Calu3 (cell line): ENCODE measurements at regions of chr10 and their contacts with region 1.

Region 1: DNA sequence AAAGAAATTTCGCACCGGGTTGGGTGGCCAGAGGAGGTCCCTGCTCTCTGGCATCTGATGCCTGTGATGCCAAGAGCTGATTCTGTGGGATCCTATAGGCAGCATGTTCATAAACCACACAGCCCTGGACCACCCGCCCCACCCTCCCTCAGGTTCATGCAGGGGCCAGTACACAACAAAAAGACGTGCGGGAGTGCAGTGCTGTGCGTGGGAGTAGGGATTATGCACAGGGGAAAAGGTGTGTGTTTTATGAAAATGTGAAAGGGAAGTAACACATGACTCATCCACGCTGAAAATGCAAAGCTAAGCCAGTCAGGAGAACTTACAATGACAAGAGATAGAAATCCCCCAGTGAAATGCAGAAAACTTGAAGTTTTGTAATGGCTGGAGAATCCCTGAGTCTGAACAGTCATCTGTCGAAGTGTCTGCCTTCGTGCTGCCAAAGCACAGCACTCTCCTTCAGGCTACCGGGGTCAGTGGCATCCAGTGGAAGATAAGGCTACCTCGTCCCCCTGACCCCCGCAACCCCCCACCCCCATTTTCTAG is 1.1 kb downstream of the KIAA1217 start:
- DNase-seq: peak; percentile 14
- H3K4me3 Mint-ChIP-seq: peak overlapping the region; percentile 88
- H3K27ac Mint-ChIP-seq: peak overlapping the region; percentile 4
- H3K4me1 Mint-ChIP-seq: peaks cover 40% of the 10 kb centered on the region
- H3K27me3 Mint-ChIP-seq: no peaks in the 10 kb centered on the region
- CTCF ChIP-seq: no peak

Region 2: DNA sequence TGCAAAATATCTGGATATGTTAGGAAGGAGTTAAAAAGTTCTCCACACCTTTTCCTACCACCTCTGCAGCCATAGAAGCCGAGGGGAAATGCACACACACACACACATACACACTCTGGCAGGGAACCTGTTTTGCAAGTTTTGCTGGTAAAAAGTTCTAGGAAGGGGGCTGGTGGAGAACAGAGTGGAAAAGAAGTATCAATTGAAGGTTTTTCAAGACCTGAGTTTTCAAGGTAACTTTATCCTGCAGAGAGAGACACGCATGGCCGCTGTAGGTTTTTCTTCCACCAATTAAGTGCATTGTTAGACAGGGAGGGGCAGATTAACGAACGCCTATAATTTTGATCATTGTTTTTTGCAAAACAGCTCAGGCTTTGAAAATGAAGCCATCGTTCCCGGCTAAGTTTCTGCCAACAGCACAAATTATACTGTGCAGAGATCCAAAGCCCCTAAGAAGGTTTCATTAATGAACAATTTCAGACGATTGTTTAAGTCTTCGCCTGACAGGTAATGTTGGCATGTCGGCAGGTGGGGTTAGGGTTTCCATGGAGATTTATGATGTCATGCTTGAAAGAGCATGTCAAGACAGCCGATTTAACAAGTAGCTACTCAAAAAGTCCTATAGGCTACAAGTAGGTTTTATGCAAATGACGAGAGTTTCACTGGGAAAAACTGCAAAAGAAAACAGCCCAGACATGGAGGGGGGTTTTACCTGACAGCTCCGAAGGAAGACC is 28.7 kb after region 1 on chr10:
- CTCF ChIA-PET with region 1: interaction called, 3 read pairs
- intact Hi-C with region 1: loop called (anchors 2 kb)
- DNase-seq: peak; percentile 74
- H3K4me3 Mint-ChIP-seq: peak overlapping the region; percentile 74
- H3K27ac Mint-ChIP-seq: peak overlapping the region; percentile 92
- H3K4me1 Mint-ChIP-seq: peaks cover 24% of the 10 kb centered on the region
- H3K27me3 Mint-ChIP-seq: no peaks in the 10 kb centered on the region
- CTCF ChIP-seq: no peak

Region 3: GRCh38 chr10:24344279-24344678 is 134.3 kb after region 1 on chr10:
- CTCF ChIA-PET with region 1: no interaction called
- intact Hi-C with region 1: loop called (anchors 10 kb)
- DNase-seq: peak; percentile 34
- H3K4me3 Mint-ChIP-seq: peak overlapping the region; percentile 46
- H3K27ac Mint-ChIP-seq: peak overlapping the region; percentile 76
- H3K4me1 Mint-ChIP-seq: peaks cover 26% of the 10 kb centered on the region
- H3K27me3 Mint-ChIP-seq: no peaks in the 10 kb centered on the region
- CTCF ChIP-seq: no peak

Region 4: DNA sequence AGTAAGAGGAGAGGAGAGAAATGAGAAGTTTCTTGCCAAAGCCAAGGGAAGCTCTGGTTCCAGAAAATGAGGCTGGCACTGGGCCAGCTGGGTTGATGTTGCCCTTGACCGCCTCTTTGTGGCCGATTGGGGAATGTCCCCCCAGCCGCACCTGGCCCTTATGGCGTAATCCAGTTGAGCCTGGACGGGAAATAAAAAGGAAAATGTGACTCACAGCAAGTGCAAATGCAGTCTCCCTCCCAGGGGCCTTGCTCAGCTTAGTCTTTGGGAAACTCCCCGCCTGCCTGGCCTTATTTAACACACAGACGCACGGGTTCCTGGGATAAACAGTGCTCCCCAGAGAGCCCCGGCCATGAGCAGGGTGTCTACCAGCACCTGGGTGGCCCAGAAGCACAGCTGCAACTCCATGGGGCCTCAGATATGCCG is 173.7 kb after region 1 on chr10:
- CTCF ChIA-PET with region 1: interaction called, 4 read pairs
- intact Hi-C with region 1: loop called (anchors 2 kb)
- DNase-seq: peak; percentile 95
- H3K4me3 Mint-ChIP-seq: peak overlapping the region; percentile 60
- H3K27ac Mint-ChIP-seq: peak overlapping the region; percentile 96
- H3K4me1 Mint-ChIP-seq: peaks cover 28% of the 10 kb centered on the region
- H3K27me3 Mint-ChIP-seq: no peaks in the 10 kb centered on the region
- CTCF ChIP-seq: peak; percentile 52

Region 5: DNA sequence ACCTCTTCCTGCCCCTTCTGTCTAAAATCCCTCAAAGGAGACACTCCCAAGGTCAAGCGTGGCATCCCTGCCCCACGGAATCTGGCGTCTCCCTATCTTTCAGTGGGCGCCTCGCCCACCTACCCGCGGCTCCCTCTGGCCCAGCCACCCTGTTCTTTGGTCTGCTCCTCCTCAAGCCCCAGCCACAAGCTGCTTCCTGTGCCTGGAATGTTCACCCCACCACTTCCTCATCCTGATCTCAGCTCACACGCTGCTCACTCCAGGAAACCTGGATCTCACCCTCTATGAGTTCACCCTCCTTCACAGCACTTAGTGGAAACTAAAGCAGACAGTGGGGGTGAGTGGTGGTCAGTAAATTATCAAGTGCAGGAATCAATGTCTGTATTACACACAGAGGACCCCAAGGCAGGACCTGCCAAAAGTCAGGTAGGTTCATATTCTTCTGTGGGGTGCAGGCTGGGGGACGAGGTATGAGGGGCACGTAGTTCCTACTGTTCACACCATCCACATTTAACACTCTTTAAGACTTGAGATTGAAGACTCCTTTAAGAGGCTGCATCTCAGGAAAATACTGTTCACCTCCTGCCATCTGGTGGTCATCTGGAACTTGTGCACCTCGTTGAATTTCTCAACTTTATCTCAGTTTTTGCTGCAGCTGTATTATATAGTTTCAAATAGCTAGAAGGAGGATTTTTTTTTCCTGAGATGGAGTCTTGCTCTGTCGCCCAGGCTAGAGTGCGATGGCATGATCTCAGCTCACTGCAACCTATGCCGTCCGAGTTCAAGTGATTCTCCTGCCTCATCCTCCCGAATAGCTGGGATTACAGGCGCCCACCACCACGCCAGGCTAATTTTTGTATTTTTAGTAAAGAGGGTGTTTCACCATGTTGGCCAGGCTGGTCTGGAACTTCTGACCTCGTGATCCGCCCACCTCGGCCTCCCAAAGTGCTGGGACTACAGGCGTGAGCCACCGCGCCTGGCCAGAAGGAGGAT is 347.0 kb after region 1 on chr10:
- CTCF ChIA-PET with region 1: interaction called, 3 read pairs
- intact Hi-C with region 1: loop called (anchors 5 kb)
- DNase-seq: peak; percentile 52
- H3K4me3 Mint-ChIP-seq: peak overlapping the region; percentile 5
- H3K27ac Mint-ChIP-seq: peak overlapping the region; percentile 34
- H3K4me1 Mint-ChIP-seq: peaks cover 27% of the 10 kb centered on the region
- H3K27me3 Mint-ChIP-seq: no peaks in the 10 kb centered on the region
- CTCF ChIP-seq: peak; percentile 64

Region 6: DNA sequence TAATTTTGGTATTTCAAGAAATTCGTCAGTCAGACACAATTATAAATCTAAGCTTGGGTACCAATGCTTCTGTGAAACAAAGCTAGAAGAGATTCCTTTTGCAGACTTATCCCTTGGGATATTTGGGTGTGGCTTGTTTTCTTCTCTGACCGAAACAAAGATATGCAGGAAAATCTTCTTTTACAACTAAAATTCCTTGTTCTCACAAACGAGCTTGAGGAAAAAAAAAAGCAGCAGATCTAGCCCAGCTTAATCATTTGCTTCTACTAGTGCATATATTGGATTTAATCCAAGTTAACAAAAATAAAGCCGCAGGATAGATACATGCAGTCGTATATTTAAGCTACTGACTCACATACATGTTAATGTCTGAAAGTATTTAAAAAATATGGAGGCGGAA is 638.2 kb after region 1 on chr10:
- CTCF ChIA-PET with region 1: no interaction called
- intact Hi-C with region 1: no loop called
- DNase-seq: no peak
- H3K4me3 Mint-ChIP-seq: no peak overlapping the region
- H3K27ac Mint-ChIP-seq: no peak overlapping the region
- H3K4me1 Mint-ChIP-seq: peaks cover 28% of the 10 kb centered on the region
- H3K27me3 Mint-ChIP-seq: no peaks in the 10 kb centered on the region
- CTCF ChIP-seq: no peak